PC-9 (cell line): ENCODE measurements at regions of chr20 and their contacts with region 1.

Region 1: GRCh38 chr20:4633780-4634179 is 87.9 kb upstream of the PRND start:
- DNase-seq: peak; percentile 28 to 94
- H3K4me3 ChIP-seq: no peak overlapping the region
- H3K27ac ChIP-seq: peak overlapping the region; percentile 71
- H3K4me1 ChIP-seq: peaks cover 23% of the 10 kb centered on the region
- H3K27me3 ChIP-seq: no peaks in the 10 kb centered on the region
- CTCF ChIP-seq: no peak

Region 2: GRCh38 chr20:4344670-4345069 is 289.1 kb before region 1 on chr20:
- CTCF ChIA-PET with region 1: no interaction called
- POLR2A ChIA-PET with region 1: no interaction called
- intact Hi-C with region 1: no loop called
- DNase-seq: no peak
- H3K4me3 ChIP-seq: no peak overlapping the region
- H3K27ac ChIP-seq: no peak overlapping the region
- H3K4me1 ChIP-seq: peaks cover 4% of the 10 kb centered on the region; the same call in 1 of the 2 replicates
- H3K27me3 ChIP-seq: no peaks in the 10 kb centered on the region
- CTCF ChIP-seq: no peak

Region 3: GRCh38 chr20:4613718-4614620 is 19.8 kb before region 1 on chr20:
- CTCF ChIA-PET with region 1: interaction called, 11 read pairs
- POLR2A ChIA-PET with region 1: interaction called, 5 read pairs
- intact Hi-C with region 1: no loop called
- DNase-seq: peak; percentile 63 to 68
- H3K4me3 ChIP-seq: no peak overlapping the region
- H3K27ac ChIP-seq: no peak overlapping the region
- H3K4me1 ChIP-seq: peaks cover 13% of the 10 kb centered on the region
- H3K27me3 ChIP-seq: no peaks in the 10 kb centered on the region
- CTCF ChIP-seq: peak; percentile 73

Region 4: DNA sequence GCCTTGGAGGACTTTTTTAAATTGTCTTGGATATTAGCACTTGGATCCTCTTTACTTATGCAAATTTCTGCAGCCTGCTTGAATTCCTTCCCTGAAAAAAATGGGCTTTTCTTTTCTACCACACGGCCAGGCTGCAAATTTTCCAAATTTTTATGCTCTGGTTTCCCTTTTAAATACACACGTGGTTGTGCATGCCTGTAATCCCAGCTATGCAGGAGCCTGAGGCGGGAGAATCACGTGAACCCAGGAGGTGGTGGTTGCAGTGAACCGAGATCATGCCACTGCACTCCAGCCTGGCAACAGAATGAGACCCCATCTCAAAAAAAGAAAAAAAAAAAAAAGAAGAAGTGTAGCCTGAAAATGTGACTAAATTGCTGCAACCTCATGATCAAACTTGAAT is 11.9 kb after region 1 on chr20:
- CTCF ChIA-PET with region 1: no interaction called
- POLR2A ChIA-PET with region 1: no interaction called
- intact Hi-C with region 1: no loop called
- DNase-seq: no peak
- H3K4me3 ChIP-seq: no peak overlapping the region
- H3K27ac ChIP-seq: no peak overlapping the region
- H3K4me1 ChIP-seq: no peaks in the 10 kb centered on the region
- H3K27me3 ChIP-seq: no peaks in the 10 kb centered on the region
- CTCF ChIP-seq: no peak

Region 5: GRCh38 chr20:4674672-4675071 is 40.9 kb after region 1 on chr20:
- CTCF ChIA-PET with region 1: no interaction called
- POLR2A ChIA-PET with region 1: no interaction called
- intact Hi-C with region 1: loop called (anchors 5 kb)
- DNase-seq: no peak
- H3K4me3 ChIP-seq: no peak overlapping the region
- H3K27ac ChIP-seq: no peak overlapping the region
- H3K4me1 ChIP-seq: 0 out of 2 replicates have a peak, but pooled peaks cover 3% of the 10 kb centered on the region
- H3K27me3 ChIP-seq: no peaks in the 10 kb centered on the region
- CTCF ChIP-seq: no peak

Region 6: GRCh38 chr20:4730780-4731179 is 97.0 kb after region 1 on chr20:
- CTCF ChIA-PET with region 1: no interaction called
- POLR2A ChIA-PET with region 1: no interaction called
- intact Hi-C with region 1: no loop called
- DNase-seq: no peak
- H3K4me3 ChIP-seq: no peak overlapping the region
- H3K27ac ChIP-seq: no peak overlapping the region
- H3K4me1 ChIP-seq: no peaks in the 10 kb centered on the region
- H3K27me3 ChIP-seq: no peaks in the 10 kb centered on the region
- CTCF ChIP-seq: no peak